ENCODE measurements at regions of chr2 and their contacts with region 1.

Region 1: GRCh38 chr2:48356701-48357325 is 173.1 kb upstream of the STON1 start:
- DNase-seq: peak in 4 of 9 experiments; percentile 28 to 81 (median 54)
- ATAC-seq: peak; percentile 88
- H3K4me3 ChIP-seq: peak overlapping the region in 1 of 2 experiments; percentile 6
- H3K4me3 Mint-ChIP-seq: peak overlapping the region; percentile 62
- H3K27ac ChIP-seq: peak overlapping the region; percentile 64 to 74
- H3K27ac Mint-ChIP-seq: peak overlapping the region; percentile 94
- H3K4me1 ChIP-seq: peaks cover 47% of the 10 kb centered on the region
- H3K4me1 Mint-ChIP-seq: peaks cover 73% of the 10 kb centered on the region
- H3K27me3 ChIP-seq: no peaks in the 10 kb centered on the region
- H3K27me3 Mint-ChIP-seq: no peaks in the 10 kb centered on the region
- CTCF ChIP-seq: no peak

Region 2: GRCh38 chr2:48315896-48316194 is 41.0 kb before region 1 on chr2:
- CTCF ChIA-PET with region 1: no interaction called
- POLR2A ChIA-PET with region 1: no interaction called
- intact Hi-C with region 1: loop called in 1 of 2 experiments (anchors 1 kb)
- DNase-seq: peak in 6 of 9 experiments; percentile 25 to 69 (median 54)
- ATAC-seq: no peak
- H3K4me3 ChIP-seq: peak overlapping the region; percentile 61 to 97
- H3K4me3 Mint-ChIP-seq: peak overlapping the region; percentile 97
- H3K27ac ChIP-seq: peak overlapping the region; percentile 93 to 96
- H3K27ac Mint-ChIP-seq: peak overlapping the region; percentile 88
- H3K4me1 ChIP-seq: peaks cover 43% of the 10 kb centered on the region
- H3K4me1 Mint-ChIP-seq: peaks cover 54% of the 10 kb centered on the region
- H3K27me3 ChIP-seq: no peaks in the 10 kb centered on the region
- H3K27me3 Mint-ChIP-seq: no peaks in the 10 kb centered on the region
- CTCF ChIP-seq: no peak

Region 3: GRCh38 chr2:48332286-48332685 is 24.5 kb before region 1 on chr2:
- CTCF ChIA-PET with region 1: no interaction called
- POLR2A ChIA-PET with region 1: no interaction called
- intact Hi-C with region 1: loop called in 1 of 2 experiments (anchors 2 kb)
- DNase-seq: peak in 2 of 9 experiments; percentile 27 to 48
- ATAC-seq: no peak
- H3K4me3 ChIP-seq: no peak overlapping the region
- H3K4me3 Mint-ChIP-seq: peak overlapping the region; percentile 58
- H3K27ac ChIP-seq: no peak overlapping the region
- H3K27ac Mint-ChIP-seq: peak overlapping the region; percentile 50
- H3K4me1 ChIP-seq: peaks cover 30% of the 10 kb centered on the region
- H3K4me1 Mint-ChIP-seq: peaks cover 61% of the 10 kb centered on the region
- H3K27me3 ChIP-seq: no peaks in the 10 kb centered on the region
- H3K27me3 Mint-ChIP-seq: no peaks in the 10 kb centered on the region
- CTCF ChIP-seq: no peak

Region 4: DNA sequence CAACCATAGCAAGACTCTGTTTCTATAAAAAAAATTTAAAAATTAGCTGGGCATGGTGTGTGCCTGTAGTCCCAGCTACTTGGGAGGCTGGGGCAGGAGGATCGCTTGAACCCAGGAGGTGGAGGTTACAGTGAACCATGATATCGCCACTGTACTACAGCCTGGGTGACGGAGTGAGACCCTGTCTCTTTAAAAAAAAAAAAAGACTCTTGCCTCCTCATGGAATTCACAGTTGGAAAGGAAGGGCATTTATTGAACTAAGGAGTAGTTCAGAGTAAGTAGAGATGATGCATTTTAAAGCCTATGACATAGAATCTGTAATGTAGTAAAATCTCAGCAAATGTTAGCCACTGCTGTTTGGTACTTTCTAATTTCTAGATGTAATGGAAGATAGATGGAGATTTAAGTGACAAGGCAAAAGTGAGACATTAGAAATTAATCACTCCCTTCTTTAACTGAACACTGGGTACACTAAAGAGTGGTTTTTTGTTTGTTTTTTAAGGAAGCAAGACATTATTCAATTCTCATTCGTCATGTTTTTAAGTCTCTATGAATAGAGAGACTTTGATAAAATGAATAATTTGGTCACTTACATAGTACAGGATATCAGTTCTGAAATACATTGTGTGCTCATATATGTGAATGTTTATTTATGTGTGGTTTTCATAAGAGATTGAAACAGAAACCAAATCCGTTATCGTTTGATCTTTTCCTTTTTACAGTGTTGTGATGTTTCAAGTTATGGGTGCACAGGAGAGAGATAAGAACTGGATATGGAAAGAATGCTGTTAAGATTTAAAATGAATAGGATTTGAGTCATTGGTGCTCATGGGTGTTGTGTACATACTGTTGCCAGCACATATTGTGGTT is 13.0 kb before region 1 on chr2:
- CTCF ChIA-PET with region 1: interaction called, 3 read pairs
- POLR2A ChIA-PET with region 1: interaction called, 3 read pairs
- intact Hi-C with region 1: loop called in 1 of 2 experiments (anchors 2 kb)
- DNase-seq: peak in 2 of 9 experiments; percentile 62 to 76
- ATAC-seq: peak; percentile 86
- H3K4me3 ChIP-seq: peak overlapping the region in 1 of 2 experiments; percentile 16
- H3K4me3 Mint-ChIP-seq: peak overlapping the region; percentile 66
- H3K27ac ChIP-seq: peak overlapping the region; percentile 35 to 58
- H3K27ac Mint-ChIP-seq: peak overlapping the region; percentile 84
- H3K4me1 ChIP-seq: peaks cover 27% of the 10 kb centered on the region
- H3K4me1 Mint-ChIP-seq: peaks cover 60% of the 10 kb centered on the region
- H3K27me3 ChIP-seq: no peaks in the 10 kb centered on the region
- H3K27me3 Mint-ChIP-seq: no peaks in the 10 kb centered on the region
- CTCF ChIP-seq: no peak

Measured in CD8-positive, alpha-beta T cell (primary cell).